OCI-LY7 (cell line): ENCODE measurements at regions of chr19 and their contacts with region 1.

Region 1: DNA sequence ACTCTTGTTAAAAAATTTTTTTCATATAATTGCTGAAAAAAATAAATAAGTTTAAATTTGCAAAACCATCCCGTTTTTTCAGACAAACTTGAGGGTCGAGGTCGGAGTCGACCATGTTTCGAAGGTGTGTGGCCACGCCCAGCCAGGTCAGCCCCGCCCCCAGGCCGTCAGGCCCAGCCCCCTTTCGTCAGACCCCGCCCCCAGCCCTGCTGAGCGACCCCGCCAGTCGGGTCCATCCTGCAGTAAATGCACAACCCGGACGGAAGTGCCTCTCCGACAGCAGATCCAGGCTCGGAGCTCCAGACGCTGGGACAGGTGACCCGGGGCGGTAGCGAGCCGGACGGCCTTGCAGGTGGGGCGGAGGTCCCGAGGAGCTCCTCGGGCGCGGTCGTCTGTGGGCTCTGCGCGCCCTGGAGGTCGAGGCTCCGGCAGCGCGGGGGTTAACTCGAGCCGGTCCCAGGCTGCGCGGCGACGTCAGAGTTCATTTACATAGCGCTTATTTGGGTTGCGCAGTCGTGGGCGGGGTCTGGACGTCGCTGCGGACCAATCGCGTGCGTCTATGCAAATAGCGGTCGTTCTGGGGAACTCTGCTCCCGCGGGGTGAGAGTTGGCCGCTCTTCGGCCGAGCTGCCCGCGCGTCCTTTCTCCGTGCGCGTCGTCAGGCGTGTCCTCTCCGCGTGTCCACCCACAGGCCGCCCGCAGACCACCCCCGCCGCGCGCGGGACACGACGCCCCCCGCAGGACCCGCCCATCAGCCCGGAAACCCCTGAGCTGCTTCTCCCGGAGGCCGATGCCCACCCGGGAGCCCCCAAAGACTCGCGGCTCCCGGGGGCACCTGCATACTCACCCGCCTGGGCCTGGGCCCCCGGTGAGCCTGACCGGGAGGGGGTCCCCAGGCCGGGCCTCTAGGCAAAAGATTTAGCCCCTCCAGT is at the start of gene OCEL1:
- DNase-seq: peak; percentile 99
- H3K4me3 ChIP-seq: peak within 1 kb of the TSS; percentile 81
- H3K27ac ChIP-seq: peak within 1 kb of the TSS; percentile 73
- H3K4me1 ChIP-seq: peaks cover 25% of the 10 kb centered on the region
- CTCF ChIP-seq: no peak
- total RNA-seq, gene OCEL1: 5.9 and 10.2 TPM in 2 replicates

Region 2: GRCh38 chr19:17069218-17069617 is 157.1 kb before region 1 on chr19:
- CTCF ChIA-PET with region 1: interaction called, 3 read pairs
- POLR2A ChIA-PET with region 1: no interaction called
- intact Hi-C with region 1: loop called (anchors 1 kb)
- DNase-seq: peak; percentile 35
- H3K4me3 ChIP-seq: no peak overlapping the region
- H3K27ac ChIP-seq: peak overlapping the region; percentile 40
- H3K4me1 ChIP-seq: peaks cover 58% of the 10 kb centered on the region
- CTCF ChIP-seq: peak; percentile 48

Region 3: GRCh38 chr19:17245244-17245984 is 19.1 kb after region 1 on chr19 and contains the start of gene NR2F6:
- CTCF ChIA-PET with region 1: no interaction called
- POLR2A ChIA-PET with region 1: interaction called, 4 read pairs
- intact Hi-C with region 1: loop called (anchors 1 kb)
- DNase-seq: no peak
- H3K4me3 ChIP-seq: peak within 1 kb of the TSS; percentile 74
- H3K27ac ChIP-seq: peak within 1 kb of the TSS; percentile 69
- H3K4me1 ChIP-seq: peaks cover 43% of the 10 kb centered on the region
- CTCF ChIP-seq: no peak
- total RNA-seq, gene NR2F6: 31.0 and 39.2 TPM in 2 replicates